ENCODE measurements at regions of chr6 and their contacts with region 1.

Region 1: DNA sequence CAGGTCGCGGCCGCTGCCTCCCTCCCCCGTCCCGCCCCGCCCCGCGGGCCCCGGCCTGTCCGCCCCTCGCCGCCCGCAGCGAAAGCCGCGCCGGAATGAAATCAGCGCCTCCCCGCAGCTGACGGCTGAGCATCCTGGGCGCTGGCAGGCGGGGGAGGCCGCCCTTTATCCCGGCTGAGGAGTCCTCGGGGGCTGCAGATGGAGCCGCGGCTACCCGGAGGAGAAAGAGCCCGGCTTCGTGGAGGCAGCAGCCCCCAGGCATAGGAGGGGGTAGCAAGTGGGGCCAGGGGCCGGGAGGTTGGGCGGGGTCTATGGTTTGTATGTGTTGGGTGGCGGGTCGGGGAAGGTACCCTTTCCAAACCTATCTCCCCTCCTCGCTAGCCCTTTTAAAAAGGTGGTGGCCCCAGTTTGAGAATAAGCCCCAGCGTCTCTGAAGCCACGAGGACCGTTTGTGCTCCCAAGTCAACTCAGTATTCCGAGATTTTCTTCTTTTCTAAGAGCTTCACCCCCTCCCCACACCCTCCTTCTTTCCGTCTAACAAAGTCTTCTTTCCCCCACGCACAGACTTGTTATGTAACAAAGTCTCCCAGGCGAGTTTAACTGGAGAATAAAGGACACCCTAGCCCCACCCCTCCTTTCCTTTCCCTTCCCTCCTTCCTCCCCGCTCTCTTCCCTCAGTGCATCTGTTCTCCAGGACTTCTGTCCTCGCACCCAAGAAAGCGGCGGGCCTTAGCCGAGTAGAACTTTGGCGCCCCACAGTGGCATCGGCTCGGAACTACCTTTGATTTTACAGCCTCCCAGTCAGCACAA is 11.0 kb downstream of the POU3F2 start:
- DNase-seq: peak; percentile 46
- ATAC-seq: peak; percentile 90
- H3K4me3 ChIP-seq: peak overlapping the region; percentile 30 to 55
- H3K27ac ChIP-seq: no peak overlapping the region
- H3K4me1 ChIP-seq: peaks cover 8% of the 10 kb centered on the region
- H3K27me3 ChIP-seq: peaks cover 24% of the 10 kb centered on the region
- CTCF ChIP-seq: peak; percentile 97

Region 2: DNA sequence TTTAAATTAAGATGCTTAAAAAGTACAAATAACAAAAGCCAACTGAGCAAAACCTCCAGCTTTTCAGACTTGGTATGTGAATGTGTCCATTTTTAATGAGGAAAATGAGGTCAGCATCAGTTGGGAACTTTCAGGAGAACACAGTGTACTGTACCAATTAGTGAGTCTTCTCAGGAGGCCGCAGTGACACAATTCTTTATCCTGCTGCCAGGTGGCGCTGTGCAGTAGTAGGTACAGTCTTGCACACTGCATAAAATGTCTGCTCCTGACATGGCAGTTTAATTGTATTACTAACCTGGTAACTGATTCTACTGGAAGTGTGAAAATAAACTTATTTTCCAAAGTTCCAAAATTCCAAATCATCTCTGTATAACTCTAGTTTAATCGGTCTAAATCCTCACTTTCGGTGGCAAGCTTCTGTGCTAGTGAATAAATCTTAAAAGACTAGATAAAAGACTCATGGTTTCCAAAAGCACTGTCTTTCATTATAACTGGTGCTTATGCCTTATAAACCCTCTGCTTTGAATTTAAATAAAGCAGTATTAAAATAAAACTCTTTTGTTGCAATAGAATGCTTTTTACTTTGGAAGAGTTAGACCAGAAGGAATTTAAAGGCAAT is 1347.6 kb before region 1 on chr6:
- CTCF ChIA-PET with region 1: no interaction called
- POLR2A ChIA-PET with region 1: no interaction called
- in situ Hi-C with region 1: no loop called
- intact Hi-C with region 1: loop called (anchors 2 kb)
- DNase-seq: peak; percentile 43
- ATAC-seq: peak; percentile 99
- H3K4me3 ChIP-seq: no peak overlapping the region
- H3K27ac ChIP-seq: no peak overlapping the region
- H3K4me1 ChIP-seq: no peaks in the 10 kb centered on the region
- H3K27me3 ChIP-seq: no peaks in the 10 kb centered on the region
- CTCF ChIP-seq: peak; percentile 91

Region 3: DNA sequence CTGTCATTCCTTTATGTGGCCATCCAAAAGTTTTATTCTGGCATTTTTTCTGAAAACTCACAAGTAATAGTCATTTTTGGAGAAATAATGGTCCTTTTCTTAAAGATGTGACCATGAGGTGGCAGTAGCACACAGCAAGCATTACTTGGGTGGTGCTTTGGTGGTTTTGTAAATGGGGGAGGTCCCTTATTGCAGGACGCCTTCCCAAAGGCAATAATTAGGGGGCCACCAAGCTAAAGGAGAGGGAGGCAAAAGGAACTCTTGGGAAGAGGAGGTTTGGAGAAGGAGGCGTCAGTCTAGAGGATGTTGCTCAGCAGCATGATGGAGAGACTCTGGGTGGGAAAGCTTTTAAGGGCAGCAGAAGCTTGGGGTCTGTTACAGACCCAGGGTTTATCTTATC is 1139.8 kb before region 1 on chr6:
- CTCF ChIA-PET with region 1: no interaction called
- POLR2A ChIA-PET with region 1: no interaction called
- in situ Hi-C with region 1: no loop called
- intact Hi-C with region 1: loop called (anchors 10 kb)
- DNase-seq: no peak
- ATAC-seq: no peak
- H3K4me3 ChIP-seq: no peak overlapping the region
- H3K27ac ChIP-seq: no peak overlapping the region
- H3K4me1 ChIP-seq: no peaks in the 10 kb centered on the region
- H3K27me3 ChIP-seq: no peaks in the 10 kb centered on the region
- CTCF ChIP-seq: peak; percentile 65

Region 4: GRCh38 chr6:98054453-98054852 is 791.0 kb before region 1 on chr6:
- CTCF ChIA-PET with region 1: no interaction called
- POLR2A ChIA-PET with region 1: no interaction called
- in situ Hi-C with region 1: no loop called
- intact Hi-C with region 1: loop called (anchors 5 kb)
- DNase-seq: no peak
- ATAC-seq: no peak
- H3K4me3 ChIP-seq: no peak overlapping the region
- H3K27ac ChIP-seq: no peak overlapping the region
- H3K4me1 ChIP-seq: no peaks in the 10 kb centered on the region
- H3K27me3 ChIP-seq: 0 out of 2 replicates have a peak, but pooled peaks cover under 1% of the 10 kb centered on the region
- CTCF ChIP-seq: peak; percentile 41; the same call in 1 of the 2 replicates

Region 5: GRCh38 chr6:98932381-98932780 is 87.0 kb after region 1 on chr6:
- CTCF ChIA-PET with region 1: no interaction called
- POLR2A ChIA-PET with region 1: no interaction called
- in situ Hi-C with region 1: no loop called
- intact Hi-C with region 1: no loop called
- DNase-seq: no peak
- ATAC-seq: no peak
- H3K4me3 ChIP-seq: no peak overlapping the region
- H3K27ac ChIP-seq: no peak overlapping the region
- H3K4me1 ChIP-seq: no peaks in the 10 kb centered on the region
- H3K27me3 ChIP-seq: no peaks in the 10 kb centered on the region
- CTCF ChIP-seq: no peak

Region 6: GRCh38 chr6:99119109-99120031 is 274.0 kb after region 1 on chr6:
- CTCF ChIA-PET with region 1: no interaction called
- POLR2A ChIA-PET with region 1: no interaction called
- in situ Hi-C with region 1: no loop called
- intact Hi-C with region 1: loop called (anchors 5 kb)
- DNase-seq: peak; percentile 18
- ATAC-seq: peak; percentile 76
- H3K4me3 ChIP-seq: no peak overlapping the region
- H3K27ac ChIP-seq: no peak overlapping the region
- H3K4me1 ChIP-seq: no peaks in the 10 kb centered on the region
- H3K27me3 ChIP-seq: peaks cover 9% of the 10 kb centered on the region
- CTCF ChIP-seq: peak; percentile 77

Measured in Panc1 (cell line).